Gastrocnemius medialis (tissue), 4 donors: ENCODE measurements at regions of chr17 and their contacts with region 1.

Region 1: GRCh38 chr17:27353461-27354050 is 59.6 kb downstream of the WSB1 start:
- DNase-seq: peak; percentile 69 to 84
- ATAC-seq: peak; percentile 83 to 85
- H3K4me3 ChIP-seq: peak overlapping the region; percentile 62 to 66 (median 65)
- H3K27ac ChIP-seq: peak overlapping the region; percentile 79 to 88 (median 84)
- H3K4me1 ChIP-seq: peaks cover 11 to 16% of the 10 kb centered on the region in 2 donors
- H3K27me3 ChIP-seq: no peaks in the 10 kb centered on the region
- CTCF ChIP-seq: peak; percentile 78 to 100 (median 99)
- POLR2A ChIP-seq: peak; percentile 79 to 89

Region 2: DNA sequence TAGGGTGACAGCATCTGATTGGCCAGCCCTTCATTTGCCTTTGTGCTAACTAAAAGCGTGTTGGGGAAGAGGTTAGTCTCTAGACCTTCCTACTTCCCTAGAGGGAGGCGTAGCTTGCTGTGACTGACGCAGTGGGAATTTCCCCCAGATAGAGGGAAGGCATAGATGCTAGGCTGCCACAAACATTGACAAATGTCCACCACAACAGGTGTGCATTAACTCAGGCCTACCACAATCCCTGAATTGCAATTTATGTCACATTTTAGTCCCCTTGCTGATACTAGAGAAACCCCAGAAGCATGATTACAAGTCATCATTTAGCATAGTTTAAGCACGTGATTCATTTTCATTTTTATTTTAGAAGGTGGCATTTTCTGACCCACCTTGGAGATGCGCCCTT is 135.9 kb before region 1 on chr17:
- in situ Hi-C with region 1: no loop called
- intact Hi-C with region 1: no loop called
- DNase-seq: no peak
- ATAC-seq: no peak
- H3K4me3 ChIP-seq: no peak overlapping the region
- H3K27ac ChIP-seq: no peak overlapping the region
- H3K4me1 ChIP-seq: no peaks in the 10 kb centered on the region
- H3K27me3 ChIP-seq: no peaks in the 10 kb centered on the region
- CTCF ChIP-seq: no peak
- POLR2A ChIP-seq: no peak

Region 3: DNA sequence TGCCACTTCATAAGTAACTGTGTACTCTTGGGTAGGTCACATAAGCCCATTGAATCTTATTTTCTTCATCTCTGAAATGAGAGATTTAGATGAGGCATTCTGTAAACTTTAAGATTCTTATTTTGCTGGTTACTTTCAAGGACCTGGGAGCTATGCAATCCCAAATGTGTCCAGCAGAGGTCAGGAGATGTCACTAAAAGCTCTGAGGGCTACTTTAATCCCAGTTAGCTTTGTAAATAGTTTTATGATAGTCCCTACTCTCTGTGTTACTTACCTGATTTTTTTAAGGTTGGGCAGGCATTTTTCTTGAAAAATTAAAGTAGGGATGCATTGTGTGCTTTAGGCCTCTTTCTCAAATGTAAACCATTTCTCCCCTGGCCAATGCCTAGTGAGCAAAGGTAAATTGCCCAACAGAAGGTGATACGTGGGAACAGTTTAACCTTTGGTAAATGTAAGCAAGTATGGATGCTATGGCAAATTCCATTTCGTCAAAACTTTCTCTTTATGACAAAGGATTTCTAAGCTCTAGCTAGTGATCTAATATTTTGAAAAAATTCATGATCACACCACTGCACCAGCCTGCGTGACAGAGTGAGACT is 116.7 kb before region 1 on chr17:
- in situ Hi-C with region 1: no loop called
- intact Hi-C with region 1: loop called (anchors 2 kb)
- DNase-seq: peak; percentile 38 to 70
- ATAC-seq: peak; percentile 87 to 89
- H3K4me3 ChIP-seq: no peak overlapping the region
- H3K27ac ChIP-seq: no peak overlapping the region
- H3K4me1 ChIP-seq: peaks cover 0 to 3% of the 10 kb centered on the region in 2 donors
- H3K27me3 ChIP-seq: no peaks in the 10 kb centered on the region
- CTCF ChIP-seq: peak; percentile 87 to 94 (median 92)
- POLR2A ChIP-seq: no peak

Region 4: GRCh38 chr17:27381007-27381501 is 27.5 kb after region 1 on chr17:
- in situ Hi-C with region 1: no loop called
- intact Hi-C with region 1: loop called (anchors 2 kb)
- DNase-seq: peak; percentile 17 to 40
- ATAC-seq: peak in 1 of 2 donors; percentile 40
- H3K4me3 ChIP-seq: no peak overlapping the region
- H3K27ac ChIP-seq: no peak overlapping the region
- H3K4me1 ChIP-seq: peaks cover 10 to 13% of the 10 kb centered on the region in 2 donors
- H3K27me3 ChIP-seq: peaks cover 0 to 8% (median 0%) of the 10 kb centered on the region in 3 donors
- CTCF ChIP-seq: peak; percentile 66 to 84 (median 76)
- POLR2A ChIP-seq: no peak

Region 5: DNA sequence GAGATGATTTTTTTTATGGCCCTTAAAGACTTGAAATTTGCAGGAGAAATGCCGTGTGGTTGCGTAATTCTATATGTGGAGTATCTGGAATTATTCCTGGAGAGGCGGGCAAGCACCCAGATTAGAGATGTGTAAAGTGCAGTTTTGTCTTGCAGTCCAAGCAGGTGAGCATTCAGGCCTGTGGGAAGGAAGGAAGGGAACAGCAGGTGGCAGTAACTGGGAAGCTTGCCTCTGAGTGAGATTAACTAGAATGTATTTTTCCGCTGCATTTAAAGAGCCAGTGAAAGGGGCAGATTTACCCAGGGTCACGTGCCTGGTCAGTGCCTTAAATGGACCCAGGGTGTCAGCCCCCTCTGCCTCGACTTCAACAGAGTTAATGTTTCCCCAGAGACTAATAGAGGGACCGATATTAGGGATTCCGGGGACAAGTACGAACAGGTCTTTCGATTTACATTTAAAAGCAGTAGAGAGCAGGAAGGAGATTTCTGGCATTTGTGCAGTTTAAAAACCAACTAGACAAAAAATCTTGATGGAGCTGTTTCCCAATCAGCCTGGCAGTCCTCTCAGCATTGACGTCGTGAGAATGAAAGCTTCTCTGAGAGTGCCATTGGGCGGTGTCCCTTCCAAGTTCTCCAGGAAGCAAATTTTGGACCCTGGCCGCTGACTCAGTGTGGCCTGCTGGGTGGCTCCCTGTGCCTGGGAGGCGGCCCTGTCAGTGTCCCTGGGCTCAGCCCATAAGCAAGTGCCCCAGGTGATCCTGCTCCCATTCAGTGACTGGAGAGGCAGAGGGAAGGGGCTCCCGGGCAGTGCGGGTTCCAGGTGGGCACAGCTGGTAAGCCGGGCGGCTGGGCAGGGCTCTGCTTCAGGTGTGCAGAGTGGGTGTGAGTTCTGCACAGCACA is 140.9 kb after region 1 on chr17:
- in situ Hi-C with region 1: no loop called
- intact Hi-C with region 1: loop called (anchors 2 kb)
- DNase-seq: peak; percentile 34 to 73
- ATAC-seq: peak; percentile 73 to 84
- H3K4me3 ChIP-seq: peak overlapping the region; percentile 12 to 36 (median 18)
- H3K27ac ChIP-seq: peak overlapping the region; percentile 5 to 27 (median 13)
- H3K4me1 ChIP-seq: peaks cover 18% of the 10 kb centered on the region in 2 donors
- H3K27me3 ChIP-seq: no peaks in the 10 kb centered on the region
- CTCF ChIP-seq: peak; percentile 33 to 63 (median 44)
- POLR2A ChIP-seq: no peak

Region 6: GRCh38 chr17:27654654-27655524 is 301.3 kb after region 1 on chr17:
- in situ Hi-C with region 1: loop called in 1 of 4 experiments (anchors 5 kb)
- intact Hi-C with region 1: loop called (anchors 2 kb)
- DNase-seq: peak in 1 of 2 donors; percentile 49
- ATAC-seq: no peak
- H3K4me3 ChIP-seq: no peak overlapping the region
- H3K27ac ChIP-seq: no peak overlapping the region
- H3K4me1 ChIP-seq: peaks cover 0 to 2% of the 10 kb centered on the region in 2 donors
- H3K27me3 ChIP-seq: no peaks in the 10 kb centered on the region
- CTCF ChIP-seq: peak; percentile 54 to 92 (median 82)
- POLR2A ChIP-seq: no peak